ENCODE measurements at regions of chr22 and their contacts with region 1.

Region 1: GRCh38 chr22:20495861-20496681 is 476 bp upstream of the KLHL22 start:
- DNase-seq: peak; percentile 80 to 89 (median 86)
- H3K4me3 ChIP-seq: peak overlapping the region; percentile 82 to 93 (median 86)
- H3K4me3 Mint-ChIP-seq: peak overlapping the region; percentile 88 to 93
- H3K27ac ChIP-seq: peak overlapping the region; percentile 92 to 95
- H3K27ac Mint-ChIP-seq: peak overlapping the region; percentile 92 to 97 (median 93)
- H3K4me1 ChIP-seq: peaks cover 18 to 28% of the 10 kb centered on the region in 2 donors
- H3K4me1 Mint-ChIP-seq: peaks cover 29% of the 10 kb centered on the region
- H3K27me3 ChIP-seq: no peaks in the 10 kb centered on the region
- H3K27me3 Mint-ChIP-seq: peaks cover 0 to 2% (median 0%) of the 10 kb centered on the region in 3 donors
- CTCF ChIP-seq: peak; percentile 84

Region 2: GRCh38 chr22:20116951-20117645 is 379.0 kb before region 1 on chr22 and contains the start of gene TRMT2A:
- intact Hi-C with region 1: loop called in 1 of 2 experiments (anchors 5 kb)
- DNase-seq: peak; percentile 97 to 99 (median 98)
- H3K4me3 ChIP-seq: peak within 1 kb of the TSS; percentile 70 to 83 (median 76)
- H3K4me3 Mint-ChIP-seq: peak within 1 kb of the TSS; percentile 80 to 90
- H3K27ac ChIP-seq: peak within 1 kb of the TSS; percentile 80 to 98
- H3K27ac Mint-ChIP-seq: peak within 1 kb of the TSS; percentile 89 to 97 (median 95)
- H3K4me1 ChIP-seq: peaks cover 21 to 33% of the 10 kb centered on the region in 2 donors
- H3K4me1 Mint-ChIP-seq: peaks cover 22% of the 10 kb centered on the region
- H3K27me3 ChIP-seq: no peaks in the 10 kb centered on the region
- H3K27me3 Mint-ChIP-seq: peaks cover 0 to 1% (median 0%) of the 10 kb centered on the region in 3 donors
- CTCF ChIP-seq: no peak
- polyA plus RNA-seq, gene TRMT2A: 20.1 to 121 (median 23.5) TPM

Region 3: GRCh38 chr22:20407829-20408228 is 88.2 kb before region 1 on chr22:
- intact Hi-C with region 1: no loop called
- DNase-seq: no peak
- H3K4me3 ChIP-seq: no peak overlapping the region
- H3K4me3 Mint-ChIP-seq: no peak overlapping the region
- H3K27ac ChIP-seq: no peak overlapping the region
- H3K27ac Mint-ChIP-seq: no peak overlapping the region
- H3K4me1 ChIP-seq: no peaks in the 10 kb centered on the region
- H3K4me1 Mint-ChIP-seq: peaks cover 6% of the 10 kb centered on the region
- H3K27me3 ChIP-seq: no peaks in the 10 kb centered on the region
- H3K27me3 Mint-ChIP-seq: peaks cover 0 to 2% (median 0%) of the 10 kb centered on the region in 3 donors
- CTCF ChIP-seq: no peak

Region 4: DNA sequence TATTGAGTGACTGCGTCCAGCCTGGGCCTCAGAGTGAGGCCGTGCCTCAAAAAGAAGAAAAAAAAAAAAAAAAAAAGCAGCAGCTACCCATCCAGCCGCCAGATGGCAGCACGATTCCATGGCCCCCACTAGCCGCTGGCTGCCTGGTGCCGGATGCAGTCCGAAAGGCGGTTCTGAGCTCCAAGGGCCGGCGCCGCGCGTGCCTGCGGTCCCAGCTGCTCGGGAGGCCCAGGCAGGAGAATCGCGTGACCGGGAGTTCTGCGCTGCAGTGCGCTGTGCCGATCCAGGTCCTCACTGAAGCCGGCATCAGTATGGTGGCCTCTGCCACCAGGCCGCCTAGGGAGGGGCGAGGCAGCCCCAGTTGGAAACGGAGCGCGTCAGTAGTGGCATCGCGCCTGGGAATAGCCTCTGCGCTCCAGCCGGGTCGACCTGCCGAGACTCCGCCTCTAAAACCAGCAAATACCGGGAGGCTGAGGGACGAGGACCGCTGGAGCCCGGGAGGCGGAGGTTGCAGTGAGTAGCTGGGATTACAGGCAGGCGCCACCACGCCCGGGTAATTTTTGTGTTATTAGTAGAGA is 77.8 kb before region 1 on chr22:
- intact Hi-C with region 1: loop called (anchors 2 to 5 kb)
- DNase-seq: peak; percentile 71 to 77 (median 77)
- H3K4me3 ChIP-seq: peak overlapping the region; percentile 1 to 72 (median 19)
- H3K4me3 Mint-ChIP-seq: peak overlapping the region; percentile 65 to 87
- H3K27ac ChIP-seq: no peak overlapping the region
- H3K27ac Mint-ChIP-seq: no peak overlapping the region
- H3K4me1 ChIP-seq: peaks cover 5 to 9% of the 10 kb centered on the region in 2 donors
- H3K4me1 Mint-ChIP-seq: peaks cover 8% of the 10 kb centered on the region
- H3K27me3 ChIP-seq: peaks cover 0 to 8% of the 10 kb centered on the region in 2 donors
- H3K27me3 Mint-ChIP-seq: peaks cover 5 to 9% (median 8%) of the 10 kb centered on the region in 3 donors
- CTCF ChIP-seq: peak; percentile 94

Region 5: GRCh38 chr22:20479612-20480196 is 16.4 kb before region 1 on chr22:
- intact Hi-C with region 1: no loop called
- DNase-seq: no peak
- H3K4me3 ChIP-seq: no peak overlapping the region
- H3K4me3 Mint-ChIP-seq: no peak overlapping the region
- H3K27ac ChIP-seq: no peak overlapping the region
- H3K27ac Mint-ChIP-seq: peak overlapping the region in 1 of 7 donors; percentile 33
- H3K4me1 ChIP-seq: no peaks in the 10 kb centered on the region
- H3K4me1 Mint-ChIP-seq: peaks cover 5% of the 10 kb centered on the region
- H3K27me3 ChIP-seq: no peaks in the 10 kb centered on the region
- H3K27me3 Mint-ChIP-seq: peaks cover 0 to 3% (median 0%) of the 10 kb centered on the region in 3 donors
- CTCF ChIP-seq: no peak

Region 6: GRCh38 chr22:20507253-20508066 is 11.4 kb after region 1 on chr22 and contains the start of gene MED15:
- intact Hi-C with region 1: loop called in 1 of 2 experiments (anchors 2 kb)
- DNase-seq: peak; percentile 83 to 91 (median 85)
- H3K4me3 ChIP-seq: peak within 1 kb of the TSS; percentile 91 to 99 (median 96)
- H3K4me3 Mint-ChIP-seq: peak within 1 kb of the TSS; percentile 96 to 98
- H3K27ac ChIP-seq: peak within 1 kb of the TSS; percentile 94 to 98
- H3K27ac Mint-ChIP-seq: peak within 1 kb of the TSS; percentile 96 to 99 (median 98)
- H3K4me1 ChIP-seq: peaks cover 28 to 42% of the 10 kb centered on the region in 2 donors
- H3K4me1 Mint-ChIP-seq: peaks cover 47% of the 10 kb centered on the region
- H3K27me3 ChIP-seq: no peaks in the 10 kb centered on the region
- H3K27me3 Mint-ChIP-seq: peaks cover 0 to 2% (median 2%) of the 10 kb centered on the region in 3 donors
- CTCF ChIP-seq: no peak
- polyA plus RNA-seq, gene MED15: 10.0 to 126 (median 17.8) TPM

Region 7: GRCh38 chr22:20531315-20532201 is 35.5 kb after region 1 on chr22:
- intact Hi-C with region 1: no loop called
- DNase-seq: peak in 1 of 3 donors; percentile 1
- H3K4me3 ChIP-seq: no peak overlapping the region
- H3K4me3 Mint-ChIP-seq: no peak overlapping the region
- H3K27ac ChIP-seq: peak overlapping the region in 1 of 2 donors; percentile 41
- H3K27ac Mint-ChIP-seq: peak overlapping the region in 6 of 7 donors; percentile 50 to 84 (median 74)
- H3K4me1 ChIP-seq: no peaks in the 10 kb centered on the region
- H3K4me1 Mint-ChIP-seq: peaks cover 27% of the 10 kb centered on the region
- H3K27me3 ChIP-seq: no peaks in the 10 kb centered on the region
- H3K27me3 Mint-ChIP-seq: peaks cover 0 to 3% (median 0%) of the 10 kb centered on the region in 3 donors
- CTCF ChIP-seq: no peak

Region 8: DNA sequence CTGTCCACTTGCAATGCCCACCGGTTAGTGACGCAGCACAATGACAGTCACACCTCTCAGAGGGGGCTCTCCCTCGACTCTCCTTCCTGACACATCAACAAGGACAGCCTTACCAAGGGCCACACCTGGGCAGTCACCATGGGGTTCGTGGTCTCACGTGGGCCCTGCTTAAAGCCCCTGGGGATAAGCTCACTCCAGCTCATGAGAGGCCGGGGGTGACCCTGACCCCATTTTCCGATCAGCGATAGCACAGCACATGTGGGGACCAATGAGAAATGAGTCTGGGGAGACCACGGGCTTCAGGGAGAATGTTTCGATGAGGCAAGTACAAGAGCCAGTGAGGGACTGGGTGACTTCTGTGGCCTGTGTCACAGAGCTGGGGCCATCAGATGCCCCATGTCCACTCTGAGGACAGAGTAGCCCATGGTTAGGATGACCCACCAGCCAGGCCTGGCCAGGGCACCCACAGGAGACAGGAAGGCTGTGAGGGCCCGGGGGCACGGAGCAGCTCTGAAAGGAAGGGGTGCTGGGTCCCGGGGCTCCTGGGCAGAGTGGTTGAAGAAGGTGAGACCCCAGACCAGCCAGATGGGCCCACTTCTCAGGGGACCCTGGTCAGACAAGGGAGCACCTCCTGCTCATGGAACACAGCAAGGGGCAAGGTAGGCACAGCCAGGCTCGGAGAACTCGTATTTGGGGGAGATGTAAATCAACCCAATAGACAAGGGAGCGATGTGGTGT is 140.2 kb after region 1 on chr22:
- intact Hi-C with region 1: no loop called
- DNase-seq: no peak
- H3K4me3 ChIP-seq: no peak overlapping the region
- H3K4me3 Mint-ChIP-seq: no peak overlapping the region
- H3K27ac ChIP-seq: no peak overlapping the region
- H3K27ac Mint-ChIP-seq: no peak overlapping the region
- H3K4me1 ChIP-seq: no peaks in the 10 kb centered on the region
- H3K4me1 Mint-ChIP-seq: no peaks in the 10 kb centered on the region
- H3K27me3 ChIP-seq: no peaks in the 10 kb centered on the region
- H3K27me3 Mint-ChIP-seq: peaks cover 0 to 10% (median 9%) of the 10 kb centered on the region in 3 donors
- CTCF ChIP-seq: no peak

Region 9: GRCh38 chr22:20858615-20859416 is 362.7 kb after region 1 on chr22 and contains the starts of genes PI4KA and SNAP29:
- intact Hi-C with region 1: loop called in 1 of 2 experiments (anchors 10 kb)
- DNase-seq: peak; percentile 97 to 99 (median 98)
- H3K4me3 ChIP-seq: peak within 1 kb of the TSS; percentile 74 to 92 (median 74)
- H3K4me3 Mint-ChIP-seq: peak within 1 kb of the TSS; percentile 93 to 95
- H3K27ac ChIP-seq: peak within 1 kb of the TSS; percentile 64 to 91
- H3K27ac Mint-ChIP-seq: peak within 1 kb of the TSS; percentile 88 to 95 (median 91)
- H3K4me1 ChIP-seq: peaks cover 52 to 62% of the 10 kb centered on the region in 2 donors
- H3K4me1 Mint-ChIP-seq: peaks cover 61% of the 10 kb centered on the region
- H3K27me3 ChIP-seq: no peaks in the 10 kb centered on the region
- H3K27me3 Mint-ChIP-seq: peaks cover 0 to 2% (median 1%) of the 10 kb centered on the region in 3 donors
- CTCF ChIP-seq: no peak
- polyA plus RNA-seq, gene PI4KA: 22.8 to 74.4 (median 38.2) TPM
- polyA plus RNA-seq, gene SNAP29: 22.3 to 32.8 (median 28.9) TPM

Measured in CD14-positive monocyte (primary cell).